Heart right ventricle (tissue), 16 donors: ENCODE measurements at regions of chr1 and their contacts with region 1.

Region 1: DNA sequence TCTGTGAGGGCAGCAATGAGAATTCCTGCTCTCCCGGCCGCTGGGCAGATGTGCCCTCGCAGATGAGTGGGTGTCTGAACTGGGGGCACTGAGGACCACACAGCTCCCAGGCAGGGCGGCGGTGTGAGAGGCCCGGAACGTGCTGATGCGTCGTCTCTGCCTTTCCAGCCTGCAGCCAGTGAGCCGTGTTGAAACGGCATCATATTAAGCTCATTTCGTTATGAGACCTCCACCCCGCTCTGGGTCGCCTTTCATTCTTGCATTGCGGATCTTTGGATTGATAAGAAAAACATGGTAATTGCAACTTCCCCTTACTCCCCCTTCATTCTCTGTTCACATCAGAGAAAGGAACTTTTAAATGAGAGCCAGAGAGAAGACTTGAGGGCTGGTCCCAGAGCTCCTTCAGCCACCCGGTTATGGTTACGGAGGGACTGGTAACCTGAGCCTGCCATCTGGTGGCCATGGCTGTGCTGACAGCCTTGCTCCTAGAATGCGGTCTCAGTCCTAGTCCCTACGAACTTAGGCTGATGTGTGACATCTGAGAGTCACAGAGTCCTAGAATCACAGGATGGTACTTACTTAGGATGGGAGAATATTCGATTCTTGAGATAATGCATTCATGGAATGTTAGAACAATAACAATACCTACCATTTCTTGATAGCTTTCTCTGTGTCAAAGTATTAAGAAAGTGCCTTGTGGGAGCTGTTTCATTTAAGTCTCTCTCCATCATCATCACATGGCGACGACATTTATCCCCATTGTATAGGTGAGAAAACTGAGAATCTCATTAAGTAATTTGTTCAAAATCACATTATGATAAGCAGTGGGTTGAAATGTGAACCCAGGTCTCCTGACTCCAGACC is 271.0 kb downstream of the TRABD2B start:
- DNase-seq: peak; percentile 74 to 78
- ATAC-seq: peak; percentile 81 to 95 (median 90)
- H3K4me3 ChIP-seq: peak overlapping the region in 5 of 10 donors; percentile 10 to 33 (median 22)
- H3K27ac ChIP-seq: no peak overlapping the region
- H3K4me1 ChIP-seq: peaks cover 0 to 20% (median 16%) of the 10 kb centered on the region in 9 donors
- H3K27me3 ChIP-seq: peaks cover 5 to 63% (median 53%) of the 10 kb centered on the region in 7 donors
- CTCF ChIP-seq: peak; percentile 63 to 95 (median 90)

Region 2: DNA sequence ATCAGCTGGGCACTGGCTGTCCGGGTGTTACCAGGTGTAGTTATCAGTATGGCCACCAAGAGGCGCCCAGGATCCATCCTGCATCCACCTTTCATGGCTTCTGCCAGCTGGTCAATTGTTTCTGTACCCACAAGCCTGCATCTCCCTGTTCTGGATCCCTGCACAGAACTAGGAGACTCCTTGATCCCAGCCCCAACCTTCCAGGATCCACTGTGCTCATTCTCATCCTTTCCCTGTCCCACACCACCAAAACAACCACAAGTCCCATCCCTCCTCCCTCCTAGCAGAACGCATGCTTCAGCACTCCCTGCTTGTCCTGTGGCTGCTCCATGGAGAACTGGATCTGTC is 337.4 kb before region 1 on chr1:
- intact Hi-C with region 1: loop called in 1 of 10 experiments (anchors 2 kb)
- DNase-seq: peak; percentile 25 to 36
- ATAC-seq: peak in 7 of 8 donors; percentile 46 to 84 (median 71)
- H3K4me3 ChIP-seq: no peak overlapping the region
- H3K27ac ChIP-seq: no peak overlapping the region
- H3K4me1 ChIP-seq: peaks cover 0 to 10% (median 0%) of the 10 kb centered on the region in 9 donors
- H3K27me3 ChIP-seq: peaks cover 0 to 8% (median under 1%) of the 10 kb centered on the region in 7 donors
- CTCF ChIP-seq: peak; percentile 13 to 75 (median 63)

Region 3: DNA sequence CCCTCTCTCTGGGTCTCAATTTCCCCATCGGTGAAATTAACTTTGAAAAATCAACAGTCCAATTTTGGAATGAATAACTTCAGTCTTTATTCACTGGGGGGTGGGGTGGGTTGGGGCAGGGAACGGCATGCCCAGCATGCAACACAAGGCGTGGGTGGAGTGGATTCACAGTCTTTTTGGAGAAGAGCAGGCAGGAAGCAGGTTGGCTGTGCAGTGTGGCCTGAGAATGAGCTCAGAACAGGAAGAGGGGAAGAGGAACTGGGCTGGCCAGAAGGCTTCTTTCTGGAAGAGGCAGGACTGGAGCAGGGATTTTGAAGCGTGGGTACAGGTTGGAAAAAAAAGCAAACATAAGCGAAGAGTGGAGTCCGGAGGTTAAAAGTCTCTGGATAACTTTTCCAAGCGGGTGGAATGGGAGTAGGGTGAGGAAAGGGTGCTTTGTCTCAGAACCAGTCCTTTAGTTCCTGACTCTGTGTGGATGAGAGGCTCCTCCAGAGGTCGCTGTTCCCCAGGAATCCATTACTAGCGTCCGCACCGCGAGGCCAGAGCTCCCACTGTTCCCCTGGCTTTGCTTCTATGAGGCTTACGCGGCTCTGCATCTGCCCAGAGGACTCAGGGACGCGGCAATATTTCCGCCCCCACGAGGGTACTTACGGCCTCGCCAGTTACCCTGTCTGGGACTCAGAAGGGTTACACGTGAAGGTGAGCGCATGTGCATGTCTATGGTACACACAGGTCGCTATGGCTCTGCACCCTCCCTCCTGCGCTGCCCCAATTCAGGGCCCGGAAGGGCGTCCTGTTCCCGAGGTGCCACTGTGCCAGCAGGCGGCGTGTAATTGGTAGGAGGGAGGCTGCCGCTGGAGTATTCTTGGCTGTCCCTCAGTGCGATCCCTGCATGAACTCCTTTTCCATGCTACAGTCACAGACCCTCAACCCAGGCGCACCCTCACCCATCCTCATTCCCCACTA is 293.9 kb before region 1 on chr1:
- intact Hi-C with region 1: loop called in 6 of 10 experiments (anchors 5 kb)
- DNase-seq: peak; percentile 58 to 78
- ATAC-seq: peak; percentile 57 to 85 (median 82)
- H3K4me3 ChIP-seq: peak overlapping the region in 4 of 10 donors; percentile 16 to 26 (median 20)
- H3K27ac ChIP-seq: peak overlapping the region in 1 of 10 donors; percentile 44
- H3K4me1 ChIP-seq: peaks cover 10 to 50% (median 40%) of the 10 kb centered on the region in 9 donors
- H3K27me3 ChIP-seq: peaks cover 18 to 100% (median 92%) of the 10 kb centered on the region in 7 donors
- CTCF ChIP-seq: peak; percentile 20 to 88 (median 77)

Region 4: DNA sequence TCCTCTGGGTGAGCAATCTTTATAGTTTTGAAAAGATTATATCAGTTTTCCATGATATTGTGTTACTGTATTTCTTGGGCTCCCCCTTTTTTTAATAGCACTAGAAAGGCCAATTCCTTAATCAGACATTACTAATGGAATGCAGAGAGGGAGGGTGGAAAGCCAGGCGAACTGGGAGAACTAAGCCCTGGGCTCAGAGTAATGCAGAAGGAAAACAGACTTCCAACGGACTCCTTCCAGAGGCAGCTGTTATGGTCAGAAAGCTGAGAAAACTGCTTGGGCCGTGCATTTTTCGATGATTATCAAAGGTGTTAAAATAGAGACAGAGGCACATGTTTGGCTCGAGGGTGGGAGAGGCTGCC is 82.0 kb before region 1 on chr1:
- intact Hi-C with region 1: no loop called
- DNase-seq: no peak
- ATAC-seq: peak in 5 of 8 donors; percentile 26 to 64 (median 55)
- H3K4me3 ChIP-seq: no peak overlapping the region
- H3K27ac ChIP-seq: peak overlapping the region in 6 of 10 donors; percentile 1 to 60 (median 44)
- H3K4me1 ChIP-seq: peaks cover 0 to 18% (median 0%) of the 10 kb centered on the region in 9 donors
- H3K27me3 ChIP-seq: peaks cover 0 to 45% (median 3%) of the 10 kb centered on the region in 7 donors
- CTCF ChIP-seq: no peak